ENCODE measurements at regions of chr13 and their contacts with region 1.

Region 1: DNA sequence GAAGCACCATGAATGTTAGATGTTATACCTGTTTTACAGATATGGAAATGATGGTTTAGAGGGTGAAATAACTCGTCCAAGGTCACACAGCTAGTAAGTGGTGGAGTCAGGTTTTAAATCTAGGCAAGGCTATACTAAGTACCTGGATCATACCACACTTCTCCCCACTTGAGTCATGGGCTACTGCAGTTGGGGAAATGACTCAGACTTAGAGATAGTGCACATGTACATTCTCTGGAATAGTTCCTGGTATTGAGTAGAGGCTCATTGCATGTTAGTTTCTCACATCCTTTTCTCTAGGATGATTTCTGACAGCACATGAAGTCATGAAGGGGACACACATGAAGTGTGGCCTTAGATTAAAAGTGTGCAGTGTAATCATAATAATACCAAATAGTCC is 76.2 kb upstream of the TNFSF11 start:
- DNase-seq: no peak
- ATAC-seq: no peak
- H3K4me3 ChIP-seq: no peak overlapping the region
- H3K27ac ChIP-seq: no peak overlapping the region
- H3K4me1 ChIP-seq: no peaks in the 10 kb centered on the region; a peak in 1 of 5 replicates
- H3K27me3 ChIP-seq: no peaks in the 10 kb centered on the region
- CTCF ChIP-seq: no peak
- EP300 ChIP-seq: no peak
- POLR2A ChIP-seq: no peak
- RAD21 ChIP-seq: no peak

Region 2: GRCh38 chr13:41678249-41678648 is 819.5 kb before region 1 on chr13:
- CTCF ChIA-PET with region 1: no interaction called
- POLR2A ChIA-PET with region 1: no interaction called
- in situ Hi-C with region 1: no loop called
- intact Hi-C with region 1: loop called (anchors 10 kb)
- DNase-seq: no peak
- ATAC-seq: no peak
- H3K4me3 ChIP-seq: no peak overlapping the region
- H3K27ac ChIP-seq: no peak overlapping the region
- H3K4me1 ChIP-seq: no peaks in the 10 kb centered on the region
- H3K27me3 ChIP-seq: no peaks in the 10 kb centered on the region
- CTCF ChIP-seq: no peak
- EP300 ChIP-seq: no peak
- POLR2A ChIP-seq: no peak
- RAD21 ChIP-seq: no peak

Region 3: DNA sequence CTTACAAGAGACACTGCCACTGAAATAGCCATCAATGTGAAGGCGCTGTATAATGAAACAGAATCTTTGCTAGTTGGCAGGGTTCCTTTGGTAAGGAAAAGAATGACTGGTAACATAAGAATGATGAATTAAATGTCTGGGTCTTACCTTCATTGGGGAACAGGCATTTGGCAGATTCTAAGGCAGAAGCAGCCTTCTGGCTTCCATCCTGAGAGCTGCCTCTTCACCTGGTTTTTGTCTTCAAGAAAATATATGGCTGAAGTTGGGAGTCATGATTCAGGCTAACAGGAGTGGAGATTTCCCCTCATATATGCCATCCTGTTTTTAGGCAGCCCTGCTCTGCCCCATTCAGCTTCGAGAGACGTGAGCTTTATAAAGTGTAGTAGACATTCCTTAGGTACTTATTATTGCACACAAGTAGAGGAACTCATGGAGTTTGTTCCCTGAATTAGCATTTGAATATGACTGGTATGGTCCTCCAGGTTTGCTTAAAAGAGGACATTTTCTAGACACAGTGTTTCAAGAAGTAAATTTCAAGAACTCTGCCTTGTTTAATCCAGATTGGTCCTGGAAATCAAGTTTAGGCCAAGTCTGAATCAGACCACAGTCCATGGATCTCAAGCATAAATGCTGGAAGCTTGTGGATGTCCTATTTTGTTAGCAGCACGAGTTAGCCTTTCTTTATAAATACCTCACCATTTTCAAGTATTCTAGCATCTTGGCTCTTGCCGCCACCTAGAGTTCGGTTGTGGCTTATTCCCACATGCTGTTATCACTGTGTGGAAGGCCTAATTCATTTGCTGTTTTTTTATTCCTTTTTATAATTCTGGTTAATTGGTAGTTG is 282.0 kb before region 1 on chr13:
- CTCF ChIA-PET with region 1: no interaction called
- POLR2A ChIA-PET with region 1: no interaction called
- in situ Hi-C with region 1: no loop called
- intact Hi-C with region 1: no loop called
- DNase-seq: peak; percentile 4 to 45 (median 10)
- ATAC-seq: peak; percentile 92
- H3K4me3 ChIP-seq: no peak overlapping the region
- H3K27ac ChIP-seq: no peak overlapping the region
- H3K4me1 ChIP-seq: no peaks in the 10 kb centered on the region; a peak in 2 of 5 replicates
- H3K27me3 ChIP-seq: no peaks in the 10 kb centered on the region
- CTCF ChIP-seq: peak; percentile 52 to 67 (median 66); a peak in 5 of 6 replicates
- EP300 ChIP-seq: no peak
- POLR2A ChIP-seq: no peak
- RAD21 ChIP-seq: peak; percentile 64 to 76

Measured in K562 (cell line).